ENCODE measurements at regions of chr3 and their contacts with region 1.

Region 1: DNA sequence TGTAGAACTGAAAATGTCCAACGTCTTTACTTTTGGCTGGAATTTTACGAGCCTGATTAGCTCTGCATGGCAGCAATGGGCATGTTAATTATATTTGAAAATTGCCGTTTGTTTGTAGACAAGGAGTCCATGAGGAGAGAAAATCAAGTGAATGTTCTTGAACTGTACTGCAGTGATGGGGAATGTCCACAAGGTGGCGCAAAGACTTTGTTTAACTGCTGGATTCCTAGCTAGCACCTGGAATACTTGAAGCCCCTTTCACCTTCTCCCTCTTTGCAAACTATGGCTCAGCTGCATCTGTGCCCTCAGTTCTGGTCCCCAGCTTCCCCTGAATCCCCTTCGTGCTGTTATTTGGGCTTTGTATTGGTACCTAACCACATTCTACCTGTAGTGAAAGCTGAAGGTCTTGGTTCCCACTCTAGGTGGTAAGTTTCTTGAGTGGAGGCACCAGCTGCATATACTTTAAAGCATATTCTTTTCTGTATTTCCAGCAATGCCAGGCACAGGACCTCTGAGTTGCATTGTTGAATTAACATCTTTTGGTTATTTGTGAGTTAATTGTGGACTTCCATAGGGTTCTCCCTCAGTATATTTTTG is 25.3 kb downstream of the EXOG start:
- DNase-seq: peak in 2 of 5 donors; percentile 57 to 58
- ATAC-seq: peak; percentile 43 to 68 (median 61)
- H3K4me3 ChIP-seq: no peak overlapping the region
- H3K27ac ChIP-seq: peak overlapping the region in 8 of 12 donors; percentile 10 to 79 (median 64)
- H3K4me1 ChIP-seq: peaks cover 0 to 38% (median 9%) of the 10 kb centered on the region in 12 donors
- H3K27me3 ChIP-seq: no peaks in the 10 kb centered on the region
- CTCF ChIP-seq: peak; percentile 86 to 97 (median 92)
- POLR2A ChIP-seq: no peak

Region 2: DNA sequence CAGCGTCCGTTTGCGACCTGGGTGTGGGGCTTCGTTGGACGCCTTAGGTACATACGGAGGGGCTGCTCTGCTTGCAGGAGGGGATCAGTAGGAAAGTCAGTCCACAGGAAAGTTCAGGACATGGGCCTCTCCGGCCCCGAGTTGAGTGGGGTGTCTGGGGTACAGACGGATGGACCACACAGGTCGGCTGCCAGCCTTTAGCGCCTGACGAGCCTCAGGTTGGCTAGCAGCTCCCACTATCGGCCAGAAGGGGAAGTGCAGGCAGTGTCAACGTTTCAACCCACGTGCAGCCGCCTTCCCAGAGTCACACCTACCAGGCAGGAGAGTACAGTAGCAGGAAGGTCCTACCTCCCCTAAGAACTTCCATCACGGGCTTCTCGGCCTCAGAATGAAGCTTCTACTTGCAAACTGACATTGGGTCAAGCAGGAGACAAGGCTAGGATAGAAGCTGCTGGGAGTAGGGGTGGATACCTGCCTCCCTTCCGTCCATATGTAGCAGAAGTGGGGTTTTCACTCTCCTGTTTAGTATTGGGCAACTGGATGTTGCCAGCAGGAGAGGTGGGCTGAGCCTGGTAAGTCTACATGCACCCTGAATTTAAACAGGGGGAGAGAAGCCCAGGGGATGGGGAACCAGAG is 129.8 kb after region 1 on chr3:
- intact Hi-C with region 1: loop called (anchors 1 to 2 kb)
- DNase-seq: peak; percentile 62 to 79 (median 71)
- ATAC-seq: peak; percentile 26 to 48 (median 45)
- H3K4me3 ChIP-seq: no peak overlapping the region
- H3K27ac ChIP-seq: peak overlapping the region in 1 of 12 donors; percentile 97
- H3K4me1 ChIP-seq: peaks cover 0 to 39% (median 6%) of the 10 kb centered on the region in 12 donors
- H3K27me3 ChIP-seq: peaks cover 0 to 43% (median 12%) of the 10 kb centered on the region in 9 donors
- CTCF ChIP-seq: peak; percentile 95 to 99 (median 97)
- POLR2A ChIP-seq: no peak

Region 3: GRCh38 chr3:38834717-38835116 is 313.2 kb after region 1 on chr3:
- intact Hi-C with region 1: loop called in 2 of 10 experiments (anchors 5 kb)
- DNase-seq: no peak
- ATAC-seq: no peak
- H3K4me3 ChIP-seq: no peak overlapping the region
- H3K27ac ChIP-seq: peak overlapping the region in 7 of 12 donors; percentile 1 to 52 (median 30)
- H3K4me1 ChIP-seq: peaks cover 0 to 17% (median 8%) of the 10 kb centered on the region in 12 donors
- H3K27me3 ChIP-seq: no peaks in the 10 kb centered on the region
- CTCF ChIP-seq: no peak
- POLR2A ChIP-seq: no peak

Region 4: GRCh38 chr3:38992117-38992760 is 470.8 kb after region 1 on chr3:
- intact Hi-C with region 1: loop called in 1 of 10 experiments (anchors 10 kb)
- DNase-seq: no peak
- ATAC-seq: no peak
- H3K4me3 ChIP-seq: no peak overlapping the region
- H3K27ac ChIP-seq: no peak overlapping the region
- H3K4me1 ChIP-seq: no peaks in the 10 kb centered on the region
- H3K27me3 ChIP-seq: no peaks in the 10 kb centered on the region
- CTCF ChIP-seq: no peak
- POLR2A ChIP-seq: no peak

Region 5: GRCh38 chr3:39051647-39052561 is 530.4 kb after region 1 on chr3 and contains the starts of genes SCN11A and WDR48:
- intact Hi-C with region 1: no loop called
- DNase-seq: peak; percentile 94 to 97 (median 96)
- ATAC-seq: peak; percentile 97 to 100 (median 99)
- H3K4me3 ChIP-seq: peak within 1 kb of the TSS; percentile 72 to 99 (median 96)
- H3K27ac ChIP-seq: peak within 1 kb of the TSS; percentile 74 to 93 (median 90)
- H3K4me1 ChIP-seq: peaks cover 4 to 48% (median 23%) of the 10 kb centered on the region in 12 donors
- H3K27me3 ChIP-seq: no peaks in the 10 kb centered on the region
- CTCF ChIP-seq: peak in 1 of 12 donors; percentile 11
- POLR2A ChIP-seq: peak in 1 of 2 donors; percentile 87
- total RNA-seq, gene SCN11A: 0.05 to 0.13 (median 0.09) TPM in 6 of 9 donors, not detected in the others
- total RNA-seq, gene WDR48: 17.9 to 35.4 (median 23.6) TPM

Measured in heart left ventricle (tissue), 16 donors.